ENCODE measurements at regions of chr18 and their contacts with region 1.

Region 1: DNA sequence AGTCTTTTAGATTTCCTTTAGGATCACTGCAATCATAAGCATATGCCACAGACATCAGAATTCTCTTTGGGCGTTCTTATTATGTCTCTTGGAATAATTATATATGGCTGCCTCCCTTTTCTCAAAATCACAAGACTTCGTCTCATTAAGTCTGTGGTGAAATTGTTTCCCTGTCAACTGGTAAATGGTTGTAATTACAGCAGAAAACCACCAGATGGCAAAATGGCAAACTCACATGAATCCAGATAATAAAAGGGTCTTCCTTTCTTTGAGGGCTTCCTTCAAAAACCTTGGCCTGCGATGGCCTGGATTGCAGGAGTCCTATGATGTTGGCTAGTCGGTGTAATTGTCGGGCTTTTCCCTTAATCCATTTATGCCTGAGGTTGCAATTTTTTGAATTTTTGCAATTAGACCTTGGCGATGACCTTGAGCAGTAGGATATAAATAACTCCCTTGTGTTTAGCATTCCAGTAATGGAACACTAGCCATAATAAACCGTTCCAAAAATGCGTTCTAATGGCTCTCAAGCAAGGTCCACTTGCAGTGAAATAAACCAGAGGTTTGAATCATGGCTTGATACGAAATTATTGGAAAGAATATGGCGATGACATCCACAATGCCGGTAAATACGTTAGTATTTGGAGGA is 656.4 kb downstream of the MBD2 start:
- DNase-seq: peak in 1 of 2 donors; percentile 39
- ATAC-seq: no peak
- H3K4me3 ChIP-seq: no peak overlapping the region
- H3K4me3 Mint-ChIP-seq: no peak overlapping the region
- H3K27ac ChIP-seq: no peak overlapping the region
- H3K27ac Mint-ChIP-seq: no peak overlapping the region
- H3K4me1 ChIP-seq: no peaks in the 10 kb centered on the region
- H3K4me1 Mint-ChIP-seq: no peaks in the 10 kb centered on the region
- H3K27me3 ChIP-seq: no peaks in the 10 kb centered on the region
- H3K27me3 Mint-ChIP-seq: no peaks in the 10 kb centered on the region
- CTCF ChIP-seq: peak; percentile 18

Region 2: GRCh38 chr18:53193870-53194269 is 374.2 kb before region 1 on chr18:
- intact Hi-C with region 1: no loop called
- DNase-seq: no peak
- ATAC-seq: no peak
- H3K4me3 ChIP-seq: no peak overlapping the region
- H3K4me3 Mint-ChIP-seq: no peak overlapping the region
- H3K27ac ChIP-seq: no peak overlapping the region
- H3K27ac Mint-ChIP-seq: no peak overlapping the region
- H3K4me1 ChIP-seq: no peaks in the 10 kb centered on the region
- H3K4me1 Mint-ChIP-seq: no peaks in the 10 kb centered on the region
- H3K27me3 ChIP-seq: no peaks in the 10 kb centered on the region
- H3K27me3 Mint-ChIP-seq: no peaks in the 10 kb centered on the region
- CTCF ChIP-seq: no peak

Region 3: GRCh38 chr18:53526101-53526870 is 41.8 kb before region 1 on chr18:
- intact Hi-C with region 1: loop called (anchors 10 kb)
- DNase-seq: no peak
- ATAC-seq: no peak
- H3K4me3 ChIP-seq: no peak overlapping the region
- H3K4me3 Mint-ChIP-seq: no peak overlapping the region
- H3K27ac ChIP-seq: no peak overlapping the region
- H3K27ac Mint-ChIP-seq: no peak overlapping the region
- H3K4me1 ChIP-seq: no peaks in the 10 kb centered on the region
- H3K4me1 Mint-ChIP-seq: no peaks in the 10 kb centered on the region
- H3K27me3 ChIP-seq: no peaks in the 10 kb centered on the region
- H3K27me3 Mint-ChIP-seq: no peaks in the 10 kb centered on the region
- CTCF ChIP-seq: no peak

Region 4: GRCh38 chr18:54671291-54671881 is 1103.3 kb after region 1 on chr18:
- intact Hi-C with region 1: loop called (anchors 5 kb)
- DNase-seq: peak in 1 of 2 donors; percentile 49
- ATAC-seq: no peak
- H3K4me3 ChIP-seq: no peak overlapping the region
- H3K4me3 Mint-ChIP-seq: no peak overlapping the region
- H3K27ac ChIP-seq: no peak overlapping the region
- H3K27ac Mint-ChIP-seq: no peak overlapping the region
- H3K4me1 ChIP-seq: no peaks in the 10 kb centered on the region
- H3K4me1 Mint-ChIP-seq: no peaks in the 10 kb centered on the region
- H3K27me3 ChIP-seq: no peaks in the 10 kb centered on the region
- H3K27me3 Mint-ChIP-seq: peaks cover 7 to 8% of the 10 kb centered on the region in 2 donors
- CTCF ChIP-seq: peak; percentile 74

Measured in natural killer cell (primary cell).